ENCODE measurements at regions of chr18 and their contacts with region 1.

Region 1: GRCh38 chr18:63325086-63325686 is 5.6 kb upstream of the BCL2 start:
- DNase-seq: no peak
- ATAC-seq: no peak
- H3K4me3 ChIP-seq: no peak overlapping the region
- H3K4me3 Mint-ChIP-seq: no peak overlapping the region
- H3K27ac ChIP-seq: no peak overlapping the region
- H3K27ac Mint-ChIP-seq: no peak overlapping the region
- H3K4me1 ChIP-seq: peaks cover 17% of the 10 kb centered on the region
- H3K4me1 Mint-ChIP-seq: peaks cover 15% of the 10 kb centered on the region
- H3K27me3 ChIP-seq: no peaks in the 10 kb centered on the region
- H3K27me3 Mint-ChIP-seq: no peaks in the 10 kb centered on the region
- CTCF ChIP-seq: no peak

Region 2: DNA sequence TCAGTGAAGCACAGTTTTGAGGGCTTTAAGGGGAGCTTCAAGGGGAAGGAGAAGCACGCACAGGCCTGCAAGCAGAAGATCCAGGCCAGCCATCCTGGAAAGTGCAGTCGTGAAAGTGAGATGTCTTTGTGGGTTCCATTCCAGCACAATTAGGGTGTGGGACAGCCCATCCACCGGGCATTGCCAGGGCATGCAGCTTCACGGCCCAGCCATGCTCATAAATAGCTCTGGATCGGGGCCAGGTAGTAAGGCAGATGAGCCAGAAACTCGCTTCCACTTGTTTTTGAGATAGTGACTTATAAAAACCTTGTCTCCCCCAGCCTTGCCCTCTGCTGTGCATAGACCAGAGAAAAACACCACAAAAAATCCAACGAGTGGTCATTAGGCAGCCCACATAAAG is 20.8 kb after region 1 on chr18:
- CTCF ChIA-PET with region 1: interaction called, 3 read pairs
- POLR2A ChIA-PET with region 1: no interaction called
- intact Hi-C with region 1: loop called in 1 of 2 experiments (anchors 2 kb)
- DNase-seq: no peak
- ATAC-seq: no peak
- H3K4me3 ChIP-seq: no peak overlapping the region
- H3K4me3 Mint-ChIP-seq: no peak overlapping the region
- H3K27ac ChIP-seq: no peak overlapping the region
- H3K27ac Mint-ChIP-seq: no peak overlapping the region
- H3K4me1 ChIP-seq: no peaks in the 10 kb centered on the region
- H3K4me1 Mint-ChIP-seq: no peaks in the 10 kb centered on the region
- H3K27me3 ChIP-seq: no peaks in the 10 kb centered on the region
- H3K27me3 Mint-ChIP-seq: no peaks in the 10 kb centered on the region
- CTCF ChIP-seq: no peak

Region 3: GRCh38 chr18:63367053-63367953 is 42.1 kb after region 1 on chr18 and contains the start of gene KDSR:
- CTCF ChIA-PET with region 1: no interaction called
- POLR2A ChIA-PET with region 1: no interaction called
- intact Hi-C with region 1: no loop called
- DNase-seq: peak; percentile 63 to 91 (median 77)
- ATAC-seq: peak; percentile 80
- H3K4me3 ChIP-seq: peak within 1 kb of the TSS; percentile 94
- H3K4me3 Mint-ChIP-seq: peak within 1 kb of the TSS; percentile 94
- H3K27ac ChIP-seq: peak within 1 kb of the TSS; percentile 65 to 72
- H3K27ac Mint-ChIP-seq: peak within 1 kb of the TSS; percentile 91
- H3K4me1 ChIP-seq: peaks cover 33% of the 10 kb centered on the region
- H3K4me1 Mint-ChIP-seq: peaks cover 56% of the 10 kb centered on the region
- H3K27me3 ChIP-seq: no peaks in the 10 kb centered on the region
- H3K27me3 Mint-ChIP-seq: no peaks in the 10 kb centered on the region
- CTCF ChIP-seq: no peak
- total RNA-seq, gene KDSR: 21.1 to 23.5 TPM

Measured in CD4-positive, alpha-beta T cell (primary cell).